Posterior vena cava (tissue), 2 donors: ENCODE measurements at regions of chr19 and their contacts with region 1.

Region 1: DNA sequence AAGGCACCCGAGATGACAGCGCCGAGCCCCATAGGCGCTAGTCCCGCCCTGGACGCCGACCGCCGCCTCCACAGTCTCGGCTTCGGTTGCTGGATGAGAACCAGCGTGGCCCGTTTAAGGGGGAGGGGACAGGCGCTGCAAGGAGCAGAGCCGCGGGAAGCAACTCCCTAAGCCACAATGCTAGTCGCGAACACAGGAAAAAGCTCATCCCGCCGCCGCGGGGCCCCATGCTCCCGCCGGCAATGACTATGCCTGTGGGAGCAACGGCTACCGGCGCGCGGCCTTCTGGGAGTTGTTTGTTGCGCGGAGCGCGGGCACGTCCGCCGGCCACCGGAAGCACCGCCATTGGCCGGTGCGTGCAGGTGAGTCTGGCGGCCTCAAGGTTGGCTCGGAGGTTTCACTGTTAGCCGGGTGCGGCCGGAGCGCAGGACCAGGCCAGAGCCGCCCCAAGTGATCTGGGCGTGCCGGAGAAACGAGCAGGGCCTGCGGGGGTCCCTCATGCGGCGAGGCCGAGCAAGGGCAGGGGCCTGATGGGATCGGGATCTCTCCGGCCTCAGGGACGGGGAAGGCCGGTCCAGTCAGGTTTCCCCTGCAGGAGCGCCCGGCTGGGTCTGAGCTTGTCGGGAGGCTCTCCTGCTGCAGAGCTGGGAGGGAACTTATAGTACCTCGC is at the start of gene ZNF544:
- DNase-seq: peak; percentile 86
- total RNA-seq, gene ZNF544: 12.2 to 15.8 TPM

Region 2: GRCh38 chr19:58278157-58279041 is 49.7 kb after region 1 on chr19 and contains the start of gene ZNF8:
- intact Hi-C with region 1: loop called in 1 of 2 experiments (anchors 10 kb)
- DNase-seq: peak; percentile 99
- total RNA-seq, gene ZNF8: 5.1 to 5.5 TPM

Region 3: DNA sequence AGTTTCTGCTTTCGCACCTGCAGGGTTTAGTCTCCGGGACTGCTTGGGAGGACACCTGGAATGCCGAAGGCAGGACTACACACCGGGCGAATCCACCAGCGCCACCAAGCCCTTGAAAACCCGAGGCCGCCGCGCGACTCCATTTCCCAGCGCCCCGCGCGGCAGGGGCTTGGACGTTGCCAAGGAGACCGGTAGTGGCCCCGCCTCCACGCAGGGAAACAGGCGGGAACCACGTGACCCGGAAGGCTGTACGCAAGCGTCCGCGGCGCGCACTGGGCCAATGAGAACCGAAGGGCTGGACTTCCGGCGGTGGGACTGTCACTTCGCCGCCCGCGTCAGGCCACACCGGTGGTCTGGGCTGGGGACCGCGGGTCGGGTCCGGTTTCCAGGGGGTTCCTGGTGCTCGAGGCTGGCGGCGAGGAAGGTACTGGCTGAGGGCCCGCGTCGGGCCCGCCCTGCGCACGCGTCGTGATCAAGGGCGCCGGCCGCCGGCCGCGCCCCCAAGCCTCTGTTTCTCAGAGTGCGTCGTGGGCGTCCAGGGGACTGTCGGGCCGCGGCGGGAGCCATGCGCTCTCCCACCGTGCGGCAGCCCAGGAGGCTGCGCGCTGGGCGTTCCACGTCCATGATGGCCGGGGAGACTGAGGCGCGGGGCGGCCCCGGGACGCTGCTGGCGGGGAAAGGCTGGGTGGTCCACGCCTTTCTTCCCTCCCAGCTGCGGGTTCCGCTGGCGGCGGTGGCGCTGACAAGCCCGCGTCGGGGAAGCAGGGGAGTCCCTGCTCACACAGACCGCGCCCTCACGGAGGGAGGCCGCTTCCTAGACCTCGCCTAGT is 238.3 kb after region 1 on chr19 and contains the start of gene ZNF324:
- intact Hi-C with region 1: no loop called
- DNase-seq: peak; percentile 100
- total RNA-seq, gene ZNF324: 7.0 to 7.8 TPM